Sigmoid colon (tissue), 7 donors: ENCODE measurements at regions of chr7 and their contacts with region 1.

Region 1: GRCh38 chr7:121395961-121396757 is at the start of gene FAM3C:
- DNase-seq: peak; percentile 94
- H3K4me3 ChIP-seq: peak within 1 kb of the TSS; percentile 60 to 79 (median 77)
- H3K27ac ChIP-seq: peak within 1 kb of the TSS; percentile 85 to 89 (median 86)
- H3K4me1 ChIP-seq: peaks cover 0 to 24% (median 14%) of the 10 kb centered on the region in 4 donors
- H3K27me3 ChIP-seq: no peaks in the 10 kb centered on the region
- CTCF ChIP-seq: peak; percentile 43 to 94 (median 80)
- EP300 ChIP-seq: no peak
- POLR2A ChIP-seq: peak; percentile 55 to 56
- total RNA-seq, gene FAM3C: 32.1 to 58.9 (median 49.2) TPM

Region 2: GRCh38 chr7:121547544-121548092 is 151.5 kb after region 1 on chr7:
- intact Hi-C with region 1: loop called (anchors 10 kb)
- DNase-seq: no peak
- H3K4me3 ChIP-seq: no peak overlapping the region
- H3K27ac ChIP-seq: no peak overlapping the region
- H3K4me1 ChIP-seq: peaks cover 0 to 13% (median 2%) of the 10 kb centered on the region in 4 donors
- H3K27me3 ChIP-seq: no peaks in the 10 kb centered on the region
- CTCF ChIP-seq: peak; percentile 59 to 78 (median 74)
- EP300 ChIP-seq: no peak
- POLR2A ChIP-seq: no peak

Region 3: GRCh38 chr7:121558288-121558687 is 162.1 kb after region 1 on chr7:
- intact Hi-C with region 1: no loop called
- DNase-seq: no peak
- H3K4me3 ChIP-seq: no peak overlapping the region
- H3K27ac ChIP-seq: no peak overlapping the region
- H3K4me1 ChIP-seq: no peaks in the 10 kb centered on the region
- H3K27me3 ChIP-seq: no peaks in the 10 kb centered on the region
- CTCF ChIP-seq: no peak
- EP300 ChIP-seq: no peak
- POLR2A ChIP-seq: no peak